ENCODE measurements at regions of chr5 and their contacts with region 1.

Region 1: GRCh38 chr5:4873652-4874051 is 266.5 kb upstream of the ADAMTS16 start:
- DNase-seq: no peak
- ATAC-seq: no peak
- H3K4me3 ChIP-seq: no peak overlapping the region
- H3K27ac ChIP-seq: no peak overlapping the region
- H3K4me1 ChIP-seq: no peaks in the 10 kb centered on the region
- H3K27me3 ChIP-seq: peaks cover 0 to 14% (median 0%) of the 10 kb centered on the region in 9 donors
- CTCF ChIP-seq: no peak
- POLR2A ChIP-seq: no peak

Region 2: GRCh38 chr5:5404381-5404780 is 530.7 kb after region 1 on chr5:
- intact Hi-C with region 1: loop called in 1 of 10 experiments (anchors 5 kb)
- DNase-seq: no peak
- ATAC-seq: no peak
- H3K4me3 ChIP-seq: no peak overlapping the region
- H3K27ac ChIP-seq: no peak overlapping the region
- H3K4me1 ChIP-seq: no peaks in the 10 kb centered on the region
- H3K27me3 ChIP-seq: no peaks in the 10 kb centered on the region
- CTCF ChIP-seq: no peak
- POLR2A ChIP-seq: no peak